ENCODE measurements at regions of chr10 and their contacts with region 1.

Region 1: DNA sequence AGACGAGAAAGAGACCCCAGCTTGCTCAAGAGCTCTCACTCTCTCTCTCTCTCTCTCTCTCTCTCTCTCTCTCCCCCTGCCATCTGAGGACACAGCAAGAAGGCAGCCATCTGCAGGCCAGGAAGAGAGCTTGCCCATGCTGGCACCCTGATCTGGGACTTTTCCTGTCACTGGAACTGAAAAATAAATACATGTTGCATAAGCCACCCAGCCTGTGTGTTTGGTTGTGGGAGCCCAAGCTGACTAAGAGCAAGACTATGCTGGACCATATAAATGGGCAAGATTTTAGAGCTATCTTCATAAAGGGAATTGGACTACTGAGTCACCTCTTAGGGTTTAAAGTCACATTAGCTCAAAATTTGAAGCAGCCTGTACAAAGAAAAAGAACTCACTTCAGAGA is 98.6 kb downstream of the SLC16A9 start:
- DNase-seq: no peak
- ATAC-seq: no peak
- H3K4me3 ChIP-seq: no peak overlapping the region
- H3K27ac ChIP-seq: no peak overlapping the region
- H3K4me1 ChIP-seq: no peaks in the 10 kb centered on the region
- H3K27me3 ChIP-seq: no peaks in the 10 kb centered on the region
- CTCF ChIP-seq: no peak
- EP300 ChIP-seq: no peak
- POLR2A ChIP-seq: no peak
- RAD21 ChIP-seq: no peak

Region 2: GRCh38 chr10:57664815-57665214 is 1946.2 kb before region 1 on chr10:
- CTCF ChIA-PET with region 1: no interaction called
- POLR2A ChIA-PET with region 1: no interaction called
- in situ Hi-C with region 1: no loop called
- intact Hi-C with region 1: no loop called
- DNase-seq: no peak
- ATAC-seq: no peak
- H3K4me3 ChIP-seq: no peak overlapping the region
- H3K27ac ChIP-seq: no peak overlapping the region
- H3K4me1 ChIP-seq: no peaks in the 10 kb centered on the region
- H3K27me3 ChIP-seq: no peaks in the 10 kb centered on the region
- CTCF ChIP-seq: no peak
- EP300 ChIP-seq: no peak
- POLR2A ChIP-seq: no peak
- RAD21 ChIP-seq: no peak

Region 3: DNA sequence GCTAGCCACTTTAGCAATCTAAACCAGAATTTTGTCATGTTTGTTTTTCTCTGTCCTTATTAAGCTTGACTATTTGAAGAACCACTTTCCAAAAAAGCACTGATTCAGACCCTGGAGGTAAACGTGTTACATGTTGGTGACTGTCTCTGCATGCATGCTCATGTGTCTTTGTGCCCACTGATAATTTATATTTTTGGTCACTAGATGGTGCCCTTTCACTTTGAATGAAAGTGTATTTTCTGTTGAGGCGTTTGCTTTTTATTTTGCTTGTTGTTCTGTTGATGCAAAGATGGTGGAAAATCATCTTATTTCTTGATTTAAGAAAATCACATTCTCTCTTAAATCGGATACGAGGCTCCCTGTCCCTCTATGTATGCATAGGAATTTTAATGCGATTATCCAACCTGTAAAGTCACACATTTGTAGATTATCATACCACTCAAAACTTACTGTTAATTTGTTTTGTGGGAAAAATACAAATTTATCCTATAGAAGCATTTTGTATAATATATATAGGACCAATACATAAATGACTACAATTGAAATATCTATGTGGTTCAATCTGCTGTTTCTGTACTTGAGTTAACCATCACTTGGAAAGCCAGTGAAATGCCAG is 829.1 kb before region 1 on chr10:
- CTCF ChIA-PET with region 1: no interaction called
- POLR2A ChIA-PET with region 1: no interaction called
- in situ Hi-C with region 1: loop called (anchors 10 kb)
- intact Hi-C with region 1: no loop called
- DNase-seq: peak; percentile 23 to 48 (median 44)
- ATAC-seq: peak; percentile 57; the same call in 1 of the 3 replicates
- H3K4me3 ChIP-seq: no peak overlapping the region
- H3K27ac ChIP-seq: no peak overlapping the region
- H3K4me1 ChIP-seq: no peaks in the 10 kb centered on the region
- H3K27me3 ChIP-seq: no peaks in the 10 kb centered on the region
- CTCF ChIP-seq: peak; percentile 29 to 71 (median 46); a peak in 4 of 6 replicates
- EP300 ChIP-seq: no peak
- POLR2A ChIP-seq: no peak
- RAD21 ChIP-seq: peak; percentile 60 to 74